Mammary epithelial cell (primary cell): ENCODE measurements at regions of chrX and their contacts with region 1.

Region 1: GRCh38 chrX:25968920-25969319 is 169.2 kb upstream of the MAGEB18 start:
- DNase-seq: no peak
- H3K4me3 ChIP-seq: no peak overlapping the region
- H3K27ac ChIP-seq: no peak overlapping the region
- H3K4me1 ChIP-seq: no peaks in the 10 kb centered on the region
- H3K27me3 ChIP-seq: no peaks in the 10 kb centered on the region
- CTCF ChIP-seq: peak; percentile 52 to 68

Region 2: DNA sequence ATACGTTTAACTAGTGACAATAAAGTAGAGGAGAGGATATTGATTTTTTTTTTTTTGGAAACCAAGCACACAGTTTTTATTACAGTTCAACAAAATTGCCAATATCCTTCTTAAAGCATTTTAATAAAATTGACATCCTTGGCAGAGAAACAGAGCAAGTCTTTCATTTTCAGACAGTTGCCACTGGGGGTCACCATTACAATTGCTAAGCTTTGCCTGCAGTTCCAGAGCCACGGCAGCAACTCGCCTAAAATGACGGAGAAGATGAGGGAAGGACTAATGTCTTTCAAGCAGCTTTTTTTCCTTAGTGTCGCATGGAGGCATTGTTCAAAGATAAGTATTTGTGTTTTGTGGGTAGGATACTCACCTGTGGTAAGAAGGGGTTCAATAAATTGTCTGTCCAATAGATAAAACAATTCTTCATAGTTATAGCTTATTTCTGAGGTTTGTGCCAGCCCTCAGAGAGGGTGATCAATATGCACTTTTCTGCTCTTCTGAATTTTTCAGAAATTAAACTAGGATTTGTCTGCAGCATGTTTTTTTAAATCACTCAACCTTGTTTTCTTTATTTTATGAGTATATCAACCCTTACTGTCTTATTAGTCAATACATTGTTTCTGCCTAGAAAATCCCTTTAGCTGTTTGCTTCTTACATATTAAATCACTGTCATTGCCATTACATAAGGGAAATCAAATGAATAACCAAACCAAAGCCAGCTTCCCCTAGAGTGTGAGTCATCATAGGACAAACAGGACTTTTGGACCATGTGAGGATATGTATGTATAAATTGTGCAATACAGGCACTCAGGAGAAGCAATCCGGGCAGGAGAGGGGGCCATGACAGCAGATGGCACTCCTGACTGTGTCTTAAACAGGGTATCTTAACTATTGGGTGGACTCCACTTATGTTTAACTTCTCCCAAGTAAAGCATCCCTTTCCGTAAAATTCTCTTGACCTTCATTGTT is 445.1 kb before region 1 on chrX:
- CTCF ChIA-PET with region 1: no interaction called
- dilution Hi-C with region 1: no loop called
- in situ Hi-C with region 1: no loop called
- intact Hi-C with region 1: loop called (anchors 5 kb)
- DNase-seq: peak; percentile 3
- H3K4me3 ChIP-seq: no peak overlapping the region
- H3K27ac ChIP-seq: no peak overlapping the region
- H3K4me1 ChIP-seq: no peaks in the 10 kb centered on the region
- H3K27me3 ChIP-seq: no peaks in the 10 kb centered on the region
- CTCF ChIP-seq: peak; percentile 8 to 41

Region 3: GRCh38 chrX:25555521-25555920 is 413.4 kb before region 1 on chrX:
- CTCF ChIA-PET with region 1: no interaction called
- dilution Hi-C with region 1: no loop called
- in situ Hi-C with region 1: no loop called
- intact Hi-C with region 1: no loop called
- DNase-seq: no peak
- H3K4me3 ChIP-seq: no peak overlapping the region
- H3K27ac ChIP-seq: no peak overlapping the region
- H3K4me1 ChIP-seq: no peaks in the 10 kb centered on the region
- H3K27me3 ChIP-seq: no peaks in the 10 kb centered on the region
- CTCF ChIP-seq: no peak

Region 4: DNA sequence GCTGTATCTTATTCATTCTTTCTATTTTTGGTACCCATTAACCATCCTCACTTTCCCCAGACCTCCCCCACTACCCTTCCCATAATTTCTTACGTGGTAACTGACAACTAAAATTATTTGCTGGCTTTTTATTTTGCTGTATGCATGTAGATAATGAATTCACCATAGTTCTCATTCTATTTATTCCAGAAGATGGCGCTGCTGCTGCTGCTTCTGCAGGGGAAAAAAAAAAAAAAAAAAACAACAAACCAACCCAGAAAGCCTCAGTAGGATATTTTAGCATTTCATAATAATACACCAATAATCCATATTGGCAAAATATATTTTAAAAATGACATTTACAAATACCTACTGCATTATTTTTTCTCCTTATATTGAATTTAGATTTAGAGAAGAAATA is 247.4 kb before region 1 on chrX:
- CTCF ChIA-PET with region 1: no interaction called
- dilution Hi-C with region 1: no loop called
- in situ Hi-C with region 1: no loop called
- intact Hi-C with region 1: loop called (anchors 1 kb)
- DNase-seq: no peak
- H3K4me3 ChIP-seq: no peak overlapping the region
- H3K27ac ChIP-seq: no peak overlapping the region
- H3K4me1 ChIP-seq: no peaks in the 10 kb centered on the region
- H3K27me3 ChIP-seq: no peaks in the 10 kb centered on the region
- CTCF ChIP-seq: peak; percentile 46 to 52

Region 5: DNA sequence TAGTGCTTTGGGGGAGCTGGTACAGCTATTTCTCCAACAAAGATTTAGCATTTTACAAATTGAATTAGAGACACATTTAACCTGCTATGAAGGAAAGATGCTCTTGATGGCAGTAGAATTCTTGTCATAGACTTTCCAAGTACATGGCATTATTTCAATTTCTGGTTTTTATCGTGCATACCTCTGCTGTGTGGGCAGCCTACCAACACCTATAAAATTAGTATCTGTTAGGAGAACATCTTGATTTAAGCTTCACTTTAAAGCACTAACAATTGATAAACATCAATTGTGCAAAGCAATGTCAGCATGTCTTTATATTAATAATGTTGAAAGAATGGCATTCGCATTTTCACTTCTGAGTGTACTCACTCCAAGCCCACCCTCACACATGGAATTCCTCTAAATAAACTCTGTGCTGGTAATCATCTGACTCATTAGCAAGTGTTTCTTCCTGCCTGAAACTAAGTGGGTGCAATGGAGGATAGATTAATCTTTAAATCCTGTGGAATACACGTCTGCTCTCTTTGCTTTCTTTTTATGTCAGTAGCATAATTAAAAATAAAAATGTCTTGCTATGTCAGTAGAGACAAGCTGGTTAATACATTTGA is 110.5 kb before region 1 on chrX:
- CTCF ChIA-PET with region 1: no interaction called
- dilution Hi-C with region 1: no loop called
- in situ Hi-C with region 1: no loop called
- intact Hi-C with region 1: loop called (anchors 5 kb)
- DNase-seq: no peak
- H3K4me3 ChIP-seq: no peak overlapping the region
- H3K27ac ChIP-seq: no peak overlapping the region
- H3K4me1 ChIP-seq: no peaks in the 10 kb centered on the region
- H3K27me3 ChIP-seq: no peaks in the 10 kb centered on the region
- CTCF ChIP-seq: no peak